Activated B cell treated with CpG ODN at 0.5 μM for 24 hours (primary cell): ENCODE measurements at regions of chr13 and their contacts with region 1.

Region 1: GRCh38 chr13:40401911-40402776 is 264.3 kb downstream of the FOXO1 start:
- DNase-seq: peak; percentile 51
- ATAC-seq: peak; percentile 100
- H3K4me3 Mint-ChIP-seq: peak overlapping the region; percentile 71
- H3K27ac Mint-ChIP-seq: peak overlapping the region; percentile 82
- H3K4me1 Mint-ChIP-seq: peaks cover 29% of the 10 kb centered on the region
- H3K27me3 Mint-ChIP-seq: no peaks in the 10 kb centered on the region
- CTCF ChIP-seq: no peak

Region 2: GRCh38 chr13:40206241-40207000 is 195.7 kb before region 1 on chr13:
- CTCF ChIA-PET with region 1: no interaction called
- POLR2A ChIA-PET with region 1: no interaction called
- intact Hi-C with region 1: loop called (anchors 1 kb)
- DNase-seq: peak; percentile 52
- ATAC-seq: peak; percentile 66
- H3K4me3 Mint-ChIP-seq: peak overlapping the region; percentile 76
- H3K27ac Mint-ChIP-seq: peak overlapping the region; percentile 100
- H3K4me1 Mint-ChIP-seq: peaks cover 72% of the 10 kb centered on the region
- H3K27me3 Mint-ChIP-seq: no peaks in the 10 kb centered on the region
- CTCF ChIP-seq: no peak

Region 3: GRCh38 chr13:40213779-40214178 is 188.4 kb before region 1 on chr13:
- CTCF ChIA-PET with region 1: no interaction called
- POLR2A ChIA-PET with region 1: interaction called, 10 read pairs
- intact Hi-C with region 1: no loop called
- DNase-seq: no peak
- ATAC-seq: no peak
- H3K4me3 Mint-ChIP-seq: no peak overlapping the region
- H3K27ac Mint-ChIP-seq: no peak overlapping the region
- H3K4me1 Mint-ChIP-seq: peaks cover 17% of the 10 kb centered on the region
- H3K27me3 Mint-ChIP-seq: no peaks in the 10 kb centered on the region
- CTCF ChIP-seq: no peak

Region 4: GRCh38 chr13:40422588-40423235 is 20.6 kb after region 1 on chr13:
- CTCF ChIA-PET with region 1: no interaction called
- POLR2A ChIA-PET with region 1: no interaction called
- intact Hi-C with region 1: loop called (anchors 1 kb)
- DNase-seq: no peak
- ATAC-seq: no peak
- H3K4me3 Mint-ChIP-seq: no peak overlapping the region
- H3K27ac Mint-ChIP-seq: no peak overlapping the region
- H3K4me1 Mint-ChIP-seq: peaks cover 28% of the 10 kb centered on the region
- H3K27me3 Mint-ChIP-seq: no peaks in the 10 kb centered on the region
- CTCF ChIP-seq: no peak

Region 5: GRCh38 chr13:40433577-40433976 is 31.4 kb after region 1 on chr13:
- CTCF ChIA-PET with region 1: no interaction called
- POLR2A ChIA-PET with region 1: interaction called, 5 read pairs
- intact Hi-C with region 1: loop called (anchors 1 kb)
- DNase-seq: no peak
- ATAC-seq: peak; percentile 68
- H3K4me3 Mint-ChIP-seq: peak overlapping the region; percentile 60
- H3K27ac Mint-ChIP-seq: peak overlapping the region; percentile 89
- H3K4me1 Mint-ChIP-seq: peaks cover 92% of the 10 kb centered on the region
- H3K27me3 Mint-ChIP-seq: no peaks in the 10 kb centered on the region
- CTCF ChIP-seq: no peak